ENCODE measurements at regions of chr5 and their contacts with region 1.

Region 1: GRCh38 chr5:93582677-93583438 is at the start of gene NR2F1:
- DNase-seq: no peak
- ATAC-seq: peak; percentile 38
- H3K4me3 Mint-ChIP-seq: no peak within 1 kb of the TSS
- H3K27ac Mint-ChIP-seq: no peak within 1 kb of the TSS
- H3K4me1 Mint-ChIP-seq: peaks cover 30% of the 10 kb centered on the region
- H3K27me3 Mint-ChIP-seq: peaks cover 49% of the 10 kb centered on the region
- CTCF ChIP-seq: no peak
- total RNA-seq, gene NR2F1: not detected

Region 2: DNA sequence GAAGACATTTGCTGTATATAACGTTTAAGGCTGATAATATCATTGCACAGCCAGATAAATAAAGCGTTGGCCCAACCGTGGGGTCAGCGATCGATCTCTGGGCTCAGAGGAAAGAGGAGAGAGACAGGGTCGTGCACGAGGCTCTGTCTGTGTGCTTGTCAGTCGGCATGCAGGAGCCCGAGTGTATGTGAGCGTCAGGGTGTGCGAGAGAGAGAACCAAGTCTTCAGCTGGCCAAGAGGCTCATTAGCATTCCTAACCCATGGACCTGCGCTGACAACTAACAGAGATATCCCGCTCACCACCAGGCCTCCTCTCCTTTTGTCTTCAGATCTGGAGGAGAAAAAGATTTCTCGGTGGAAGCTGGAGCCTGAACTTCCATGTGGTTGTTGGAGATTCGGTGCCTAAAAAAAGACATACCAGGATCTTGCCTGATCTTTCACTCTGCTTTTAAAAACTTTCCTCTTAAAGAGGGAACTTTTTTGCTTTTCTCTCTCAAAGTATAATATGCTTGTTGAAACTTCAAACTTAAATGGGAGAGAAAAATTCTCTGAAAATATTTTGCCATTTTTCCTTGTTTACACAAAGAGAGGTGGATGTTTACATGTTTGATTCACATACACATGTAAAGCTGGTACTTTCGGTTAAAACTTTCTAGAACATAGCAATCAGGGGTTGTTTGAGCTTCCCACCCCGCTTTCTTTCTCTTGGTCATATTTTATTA is 16.7 kb after region 1 on chr5:
- CTCF ChIA-PET with region 1: interaction called, 13 read pairs
- POLR2A ChIA-PET with region 1: no interaction called
- intact Hi-C with region 1: no loop called
- DNase-seq: no peak
- ATAC-seq: no peak
- H3K4me3 Mint-ChIP-seq: no peak overlapping the region
- H3K27ac Mint-ChIP-seq: no peak overlapping the region
- H3K4me1 Mint-ChIP-seq: peaks cover 11% of the 10 kb centered on the region
- H3K27me3 Mint-ChIP-seq: peaks cover 50% of the 10 kb centered on the region
- CTCF ChIP-seq: no peak

Region 3: DNA sequence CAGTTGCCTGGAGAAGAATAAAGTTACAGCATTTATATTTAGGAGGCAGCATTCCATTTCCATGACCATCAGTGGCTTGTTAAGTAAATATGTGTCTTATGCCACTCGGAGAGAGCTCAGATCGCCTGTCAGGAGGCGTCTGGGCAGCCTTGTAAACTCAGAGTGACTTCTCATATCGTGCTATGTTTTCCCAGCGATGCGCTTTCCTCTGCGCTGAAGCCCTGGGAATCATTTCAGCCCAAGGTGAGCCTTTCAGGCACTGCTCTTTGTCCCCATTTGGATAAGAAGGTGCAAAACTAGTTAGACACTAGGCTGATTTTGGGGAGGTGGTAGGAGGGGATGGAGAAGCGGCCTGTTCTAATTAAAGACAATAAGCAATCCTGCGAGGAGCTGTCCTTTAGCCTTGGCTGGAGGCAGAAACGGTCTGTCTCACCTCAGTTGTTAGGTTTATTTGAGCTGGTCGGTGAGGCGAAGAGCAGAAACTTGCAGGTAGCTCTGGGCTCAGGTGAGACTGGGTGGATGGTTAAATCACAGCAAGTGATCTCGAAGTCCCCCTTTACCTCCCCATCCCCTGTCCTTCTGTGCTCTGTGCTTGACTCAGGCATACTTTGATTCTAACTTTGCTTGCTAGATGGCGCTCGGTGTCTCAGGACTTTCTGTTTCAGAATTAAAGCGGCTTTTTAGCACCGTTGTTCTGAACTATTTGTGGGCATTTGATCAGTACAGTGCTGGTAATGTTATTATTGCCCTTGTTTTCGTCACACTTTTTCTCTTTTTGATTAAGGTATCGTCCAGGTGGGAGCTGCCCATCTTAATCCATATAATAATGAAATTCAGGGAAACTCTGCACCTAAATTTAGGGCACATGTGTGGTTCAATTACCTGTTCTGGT is 24.8 kb after region 1 on chr5:
- CTCF ChIA-PET with region 1: interaction called, 10 read pairs
- POLR2A ChIA-PET with region 1: interaction called, 3 read pairs
- intact Hi-C with region 1: no loop called
- DNase-seq: peak; percentile 59
- ATAC-seq: peak; percentile 81
- H3K4me3 Mint-ChIP-seq: no peak overlapping the region
- H3K27ac Mint-ChIP-seq: no peak overlapping the region
- H3K4me1 Mint-ChIP-seq: peaks cover 15% of the 10 kb centered on the region
- H3K27me3 Mint-ChIP-seq: peaks cover 77% of the 10 kb centered on the region
- CTCF ChIP-seq: peak; percentile 45

Region 4: GRCh38 chr5:93620487-93621326 is 37.8 kb after region 1 on chr5:
- CTCF ChIA-PET with region 1: interaction called, 3 read pairs
- POLR2A ChIA-PET with region 1: no interaction called
- intact Hi-C with region 1: loop called (anchors 5 kb)
- DNase-seq: peak; percentile 75
- ATAC-seq: peak; percentile 90
- H3K4me3 Mint-ChIP-seq: peak overlapping the region; percentile 94
- H3K27ac Mint-ChIP-seq: peak overlapping the region; percentile 77
- H3K4me1 Mint-ChIP-seq: peaks cover 30% of the 10 kb centered on the region
- H3K27me3 Mint-ChIP-seq: peaks cover 12% of the 10 kb centered on the region
- CTCF ChIP-seq: no peak

Region 5: GRCh38 chr5:93911609-93912008 is 328.8 kb after region 1 on chr5:
- CTCF ChIA-PET with region 1: interaction called, 4 read pairs
- POLR2A ChIA-PET with region 1: no interaction called
- intact Hi-C with region 1: loop called (anchors 5 kb)
- DNase-seq: no peak
- ATAC-seq: no peak
- H3K4me3 Mint-ChIP-seq: no peak overlapping the region
- H3K27ac Mint-ChIP-seq: no peak overlapping the region
- H3K4me1 Mint-ChIP-seq: peaks cover 2% of the 10 kb centered on the region
- H3K27me3 Mint-ChIP-seq: no peaks in the 10 kb centered on the region
- CTCF ChIP-seq: no peak